SK-MEL-5 (cell line): ENCODE measurements at regions of chr12 and their contacts with region 1.

Region 1: GRCh38 chr12:56601503-56601902 is 28.6 kb downstream of the BAZ2A start:
- DNase-seq: peak; percentile 41

Region 2: DNA sequence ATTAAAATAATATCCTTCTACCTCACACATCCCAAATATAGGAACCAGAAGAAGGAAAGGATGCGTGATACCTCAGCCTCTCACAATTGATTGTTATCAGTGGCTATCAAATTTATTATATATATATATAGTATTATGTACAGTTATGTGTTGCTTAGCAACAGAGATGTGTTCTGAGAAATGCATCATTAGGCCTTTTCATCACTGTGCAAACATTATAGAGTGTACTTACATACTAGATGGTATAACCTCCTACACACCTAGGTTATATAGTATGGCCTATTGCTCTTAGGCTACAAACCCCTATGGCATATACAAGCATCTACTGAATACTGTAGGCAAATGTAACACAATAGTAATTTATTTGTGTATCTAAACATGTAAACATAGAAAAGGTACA is 707.8 kb before region 1 on chr12:
- in situ Hi-C with region 1: no loop called
- DNase-seq: no peak

Region 3: GRCh38 chr12:56521590-56522371 is 79.7 kb before region 1 on chr12 and contains the start of gene RBMS2:
- in situ Hi-C with region 1: loop called (anchors 25 kb)
- DNase-seq: peak; percentile 93
- total RNA-seq, gene RBMS2: 4.9 and 6.0 TPM in 2 replicates